ENCODE measurements at regions of chr2 and their contacts with region 1.

Region 1: GRCh38 chr2:162123806-162124758 is 28.0 kb downstream of the GCG start:
- DNase-seq: peak; percentile 69
- ATAC-seq: peak; percentile 70
- H3K4me3 ChIP-seq: no peak overlapping the region
- H3K27ac ChIP-seq: no peak overlapping the region
- H3K4me1 ChIP-seq: peaks cover 11% of the 10 kb centered on the region
- H3K27me3 ChIP-seq: no peaks in the 10 kb centered on the region; a peak in 1 of 5 replicates
- CTCF ChIP-seq: peak; percentile 76
- EP300 ChIP-seq: no peak
- POLR2A ChIP-seq: no peak
- RAD21 ChIP-seq: peak; percentile 80

Region 2: DNA sequence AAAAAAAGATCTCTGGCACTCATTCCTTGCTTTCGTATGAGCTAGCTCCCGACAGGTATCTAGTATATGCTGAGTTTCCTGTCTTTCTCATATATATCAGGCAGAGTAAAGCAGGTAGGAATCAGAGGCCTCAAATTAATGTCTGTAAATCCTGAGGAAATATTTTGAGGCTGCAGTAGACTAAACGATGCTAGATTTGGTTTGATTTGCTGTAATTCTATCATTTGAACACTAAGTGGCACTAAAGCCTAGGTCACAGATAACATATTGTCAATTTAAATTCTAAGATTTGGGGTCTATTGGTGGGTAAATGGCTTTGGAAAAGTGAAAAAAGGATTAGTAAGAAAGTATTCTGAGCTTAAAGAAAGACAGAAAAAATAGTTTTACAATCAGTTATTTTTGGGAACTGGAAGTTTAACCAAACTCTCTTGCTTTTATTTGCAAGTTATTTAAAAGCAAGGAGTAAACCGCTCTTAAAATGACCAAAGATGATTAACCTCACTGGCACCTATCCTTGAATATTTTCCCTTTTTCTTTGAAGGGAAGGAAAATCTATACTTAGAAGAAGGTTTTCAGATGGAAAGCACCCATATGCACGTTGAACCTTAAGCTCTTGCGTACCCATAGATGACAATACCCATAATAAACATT is 537.4 kb before region 1 on chr2:
- CTCF ChIA-PET with region 1: interaction called, 10 read pairs
- POLR2A ChIA-PET with region 1: no interaction called
- in situ Hi-C with region 1: loop called (anchors 5 kb)
- intact Hi-C with region 1: loop called (anchors 2 kb)
- DNase-seq: peak; percentile 22
- ATAC-seq: peak; percentile 66
- H3K4me3 ChIP-seq: no peak overlapping the region
- H3K27ac ChIP-seq: no peak overlapping the region
- H3K4me1 ChIP-seq: no peaks in the 10 kb centered on the region
- H3K27me3 ChIP-seq: no peaks in the 10 kb centered on the region
- CTCF ChIP-seq: peak; percentile 69
- EP300 ChIP-seq: no peak
- POLR2A ChIP-seq: no peak
- RAD21 ChIP-seq: peak; percentile 60

Region 3: GRCh38 chr2:162007447-162008040 is 116.5 kb before region 1 on chr2:
- CTCF ChIA-PET with region 1: interaction called, 63 read pairs
- POLR2A ChIA-PET with region 1: no interaction called
- in situ Hi-C with region 1: loop called (anchors 5 kb)
- intact Hi-C with region 1: loop called (anchors 1 kb)
- DNase-seq: no peak
- ATAC-seq: no peak
- H3K4me3 ChIP-seq: no peak overlapping the region
- H3K27ac ChIP-seq: no peak overlapping the region
- H3K4me1 ChIP-seq: peaks cover 10% of the 10 kb centered on the region
- H3K27me3 ChIP-seq: no peaks in the 10 kb centered on the region
- CTCF ChIP-seq: peak; percentile 45
- EP300 ChIP-seq: no peak
- POLR2A ChIP-seq: no peak
- RAD21 ChIP-seq: peak; percentile 32; the same call in 1 of the 2 replicates

Region 4: DNA sequence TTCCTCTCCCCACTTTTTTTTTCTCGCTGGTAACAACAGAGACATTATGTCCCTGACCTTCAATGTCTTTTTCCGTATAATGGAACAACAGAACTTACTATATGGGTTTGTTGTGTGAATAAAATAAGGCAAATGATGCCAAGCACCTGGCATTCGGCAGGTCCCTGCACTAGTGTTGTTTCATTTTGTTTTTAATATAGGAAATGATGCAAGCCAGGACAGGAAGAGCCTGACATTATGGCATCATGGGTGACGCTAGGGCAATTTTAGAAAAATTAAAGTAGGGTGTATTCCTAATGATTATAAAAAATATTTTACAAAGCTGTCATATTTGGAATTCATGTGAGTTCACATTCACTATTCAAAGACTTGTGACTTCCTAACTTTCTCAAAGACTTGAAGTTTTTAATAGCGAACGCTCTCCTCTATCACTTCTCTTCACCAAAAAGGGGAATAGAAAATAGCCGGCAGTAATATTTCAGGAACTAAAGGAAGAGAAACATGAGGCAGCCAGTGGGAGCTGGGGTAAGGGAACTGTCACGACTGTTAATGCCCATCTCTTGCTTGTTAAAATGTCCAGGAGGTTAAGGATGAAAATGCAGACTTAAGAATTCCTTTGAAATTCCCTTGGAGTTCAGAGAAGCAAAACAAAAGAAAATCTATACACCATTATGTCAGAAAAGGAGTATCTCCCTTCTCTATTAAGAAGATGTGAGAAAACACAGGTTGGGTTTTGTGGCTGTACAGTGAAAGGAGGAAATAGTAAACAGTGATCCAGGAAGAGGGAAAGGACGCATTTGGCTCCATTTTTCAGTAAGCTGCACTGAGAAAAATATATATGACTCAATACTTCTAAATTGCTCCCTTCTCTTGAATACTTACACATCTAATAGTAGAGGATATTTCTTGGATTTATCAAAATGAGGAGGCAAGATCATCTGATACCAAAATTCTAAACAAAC is 110.3 kb before region 1 on chr2:
- CTCF ChIA-PET with region 1: interaction called, 63 read pairs
- POLR2A ChIA-PET with region 1: no interaction called
- in situ Hi-C with region 1: loop called (anchors 5 kb)
- intact Hi-C with region 1: no loop called
- DNase-seq: no peak
- ATAC-seq: no peak
- H3K4me3 ChIP-seq: no peak overlapping the region
- H3K27ac ChIP-seq: no peak overlapping the region
- H3K4me1 ChIP-seq: peaks cover 28% of the 10 kb centered on the region
- H3K27me3 ChIP-seq: no peaks in the 10 kb centered on the region
- CTCF ChIP-seq: no peak
- EP300 ChIP-seq: no peak
- POLR2A ChIP-seq: no peak
- RAD21 ChIP-seq: no peak